GM10248 (cell line): ENCODE measurements at regions of chr15 and their contacts with region 1.

Region 1: GRCh38 chr15:52078876-52079700 is 33.5 kb downstream of the BCL2L10 start:
- DNase-seq: peak; percentile 80
- CTCF ChIP-seq: peak; percentile 75

Region 2: DNA sequence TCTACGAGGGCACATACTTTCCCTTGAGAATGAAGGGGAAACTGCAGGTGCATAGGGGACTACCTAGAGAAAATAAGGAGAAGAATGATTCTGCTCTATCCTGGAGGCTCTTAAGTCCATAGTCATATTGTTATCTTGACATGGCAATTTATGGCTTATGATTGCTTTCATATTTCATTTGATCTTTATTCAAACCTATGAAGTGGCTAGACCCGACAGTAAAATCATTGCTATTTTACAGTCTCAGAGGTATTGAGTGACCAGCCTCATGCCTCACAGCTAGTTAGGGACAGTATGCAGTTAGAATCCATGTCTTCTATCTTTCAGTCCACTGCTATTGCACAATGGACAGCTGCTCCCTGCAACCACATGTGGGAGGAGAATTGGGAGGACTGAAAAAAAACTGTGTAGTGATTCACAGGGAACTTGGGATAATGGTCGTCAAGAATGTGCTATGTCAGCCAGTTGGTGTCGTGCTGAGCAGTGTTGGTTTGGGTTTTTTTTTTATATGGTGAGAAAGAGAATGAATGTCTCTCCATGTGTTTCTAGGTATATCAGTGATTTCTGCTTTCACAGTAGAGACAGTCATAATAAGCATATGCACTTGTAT is 1250.4 kb before region 1 on chr15:
- CTCF ChIA-PET with region 1: no interaction called
- POLR2A ChIA-PET with region 1: no interaction called
- DNase-seq: no peak
- CTCF ChIP-seq: no peak

Region 3: GRCh38 chr15:51658670-51659069 is 420.4 kb before region 1 on chr15:
- CTCF ChIA-PET with region 1: no interaction called
- POLR2A ChIA-PET with region 1: no interaction called
- DNase-seq: no peak
- CTCF ChIP-seq: no peak

Region 4: DNA sequence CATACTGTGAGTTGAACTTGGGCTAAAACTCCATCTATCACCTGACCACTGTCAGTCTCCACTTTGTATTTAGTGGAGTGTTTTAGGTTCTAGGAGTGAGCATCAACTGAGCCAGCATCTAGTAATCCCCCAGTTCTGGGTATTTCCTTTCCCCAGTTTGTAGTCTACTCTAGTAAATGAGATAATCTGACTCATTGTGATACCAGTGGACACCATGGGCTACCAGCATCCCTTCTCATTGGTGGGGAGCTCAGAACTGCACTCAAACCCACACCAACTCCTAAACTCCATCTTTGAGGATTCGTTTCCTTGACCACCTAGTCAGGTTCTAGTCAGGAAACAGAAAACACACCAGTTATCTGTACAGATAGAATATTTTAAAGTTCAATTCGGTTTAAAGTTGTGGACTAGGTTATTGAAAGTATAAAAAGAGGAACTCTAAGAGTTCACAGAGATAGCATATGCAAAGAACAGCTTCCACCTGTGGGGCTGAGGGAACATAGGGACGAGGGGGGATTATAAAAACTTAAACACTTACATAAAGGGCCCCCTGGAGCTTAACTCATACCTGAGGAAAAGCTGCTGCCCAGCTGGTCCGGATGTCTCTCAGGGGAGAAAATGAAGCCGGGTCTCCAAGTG is 143.5 kb before region 1 on chr15:
- CTCF ChIA-PET with region 1: no interaction called
- POLR2A ChIA-PET with region 1: no interaction called
- DNase-seq: peak; percentile 75
- CTCF ChIP-seq: no peak

Region 5: DNA sequence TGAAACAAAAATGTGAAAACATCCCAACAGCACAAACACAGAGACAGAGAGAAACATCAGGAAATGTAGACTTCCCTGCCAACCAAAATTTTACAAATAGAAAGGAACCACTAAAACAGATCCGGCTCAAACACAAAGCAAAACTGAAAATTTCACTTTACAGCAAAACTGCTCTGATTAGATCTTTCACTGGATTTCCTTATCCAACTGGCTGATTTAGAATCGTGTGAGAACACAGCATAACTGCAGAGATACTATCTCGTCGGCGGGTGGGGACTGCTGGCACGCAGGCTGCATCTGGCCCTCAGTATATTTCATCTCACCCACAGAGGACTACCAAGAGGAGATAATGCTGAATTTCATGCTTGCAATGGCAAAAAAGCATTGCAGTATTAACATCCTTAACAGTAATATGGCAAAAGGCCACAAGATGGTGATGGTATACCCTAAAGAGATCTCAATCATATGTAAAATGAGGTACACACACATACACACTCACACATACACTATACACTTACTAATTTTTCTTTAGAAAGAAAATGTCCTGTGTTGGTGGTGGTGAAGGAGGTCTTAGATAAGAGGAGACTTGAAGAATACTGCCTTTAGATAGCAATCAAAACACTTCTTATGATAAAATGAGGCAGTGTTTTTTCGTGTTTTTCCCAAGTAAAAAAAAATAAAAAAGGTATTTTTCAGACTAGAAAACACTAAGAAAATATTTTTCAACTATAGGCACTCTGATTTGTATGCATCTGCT is 96.9 kb before region 1 on chr15:
- CTCF ChIA-PET with region 1: interaction called, 38 read pairs
- POLR2A ChIA-PET with region 1: no interaction called
- DNase-seq: peak; percentile 78
- CTCF ChIP-seq: peak; percentile 56

Region 6: DNA sequence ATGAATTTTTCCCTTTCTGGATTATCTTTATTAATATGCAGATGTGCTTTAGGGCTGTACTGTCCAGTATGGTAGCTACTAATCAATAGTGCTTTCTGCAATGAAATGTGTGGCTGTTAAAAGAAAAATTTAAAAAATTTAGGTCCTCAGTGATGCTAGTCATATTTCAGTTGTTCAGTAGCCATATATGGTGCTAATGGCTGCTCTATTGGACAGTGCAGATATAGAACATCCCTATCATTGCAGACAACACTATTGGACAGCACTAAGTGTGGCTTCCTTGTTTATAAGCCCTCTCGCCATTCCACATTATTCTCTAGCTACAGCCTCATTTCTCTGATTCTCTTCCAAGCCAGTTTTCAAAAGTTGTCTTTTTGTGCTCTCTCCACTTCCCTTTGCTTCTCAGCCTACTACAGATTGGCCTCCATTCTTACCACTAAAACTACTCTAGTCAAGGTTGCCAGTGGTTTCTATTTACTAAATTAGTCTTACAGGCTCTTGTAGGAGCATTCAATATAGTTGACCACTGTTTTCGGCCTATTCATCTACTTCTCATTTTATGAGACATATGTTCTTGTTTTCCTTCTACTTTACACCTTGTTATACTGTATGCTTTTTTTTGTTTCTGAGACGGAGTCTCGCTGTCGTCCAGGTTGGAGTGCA is 50.5 kb before region 1 on chr15:
- CTCF ChIA-PET with region 1: interaction called, 11 read pairs
- POLR2A ChIA-PET with region 1: no interaction called
- DNase-seq: no peak
- CTCF ChIP-seq: no peak

Region 7: DNA sequence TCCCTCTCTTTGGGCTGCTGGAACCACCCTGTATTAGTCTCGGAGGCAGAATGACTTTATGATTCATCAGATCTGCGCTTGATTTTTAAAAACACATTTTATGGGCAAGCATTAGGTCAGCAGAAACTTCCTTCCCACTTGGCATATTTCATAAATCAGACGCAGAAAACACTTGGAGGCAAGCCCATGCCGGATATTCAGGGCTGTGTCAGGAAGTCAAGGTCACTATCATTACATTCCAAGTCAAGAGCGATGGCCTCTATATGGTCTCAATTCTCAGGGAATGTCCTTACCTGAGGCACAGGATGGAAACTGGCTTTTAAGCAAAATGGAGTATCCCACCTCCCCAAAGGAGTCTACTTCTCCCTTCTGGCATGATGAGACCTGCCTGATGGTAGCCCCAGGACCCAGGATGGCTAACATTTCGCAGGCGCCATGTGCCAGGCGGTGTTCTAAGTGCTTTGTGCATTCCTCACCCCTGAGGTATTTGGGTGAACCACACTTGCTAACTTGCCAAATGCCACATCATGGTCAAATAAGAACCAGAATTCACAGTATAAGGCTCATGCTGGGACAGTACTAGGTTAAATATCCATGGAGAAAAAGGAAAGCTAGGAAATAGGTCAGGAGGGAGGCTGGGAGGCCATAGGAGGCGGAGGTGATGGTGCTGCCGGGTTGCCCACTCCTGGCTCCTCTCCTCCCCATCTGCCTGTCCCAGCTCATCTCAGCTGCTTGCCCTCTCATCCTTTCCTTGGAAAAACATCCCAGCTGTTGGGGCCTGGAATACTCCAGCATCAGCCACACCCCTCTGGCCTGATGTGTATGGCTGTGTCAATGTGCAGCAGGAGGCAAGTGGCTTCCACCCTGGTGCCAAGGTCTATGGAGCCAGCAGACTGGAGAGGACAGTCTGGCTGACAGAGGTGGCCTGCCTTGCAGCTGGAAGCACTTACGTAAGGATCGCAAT is 14.7 kb after region 1 on chr15:
- CTCF ChIA-PET with region 1: interaction called, 46 read pairs
- POLR2A ChIA-PET with region 1: no interaction called
- DNase-seq: no peak
- CTCF ChIP-seq: no peak

Region 8: DNA sequence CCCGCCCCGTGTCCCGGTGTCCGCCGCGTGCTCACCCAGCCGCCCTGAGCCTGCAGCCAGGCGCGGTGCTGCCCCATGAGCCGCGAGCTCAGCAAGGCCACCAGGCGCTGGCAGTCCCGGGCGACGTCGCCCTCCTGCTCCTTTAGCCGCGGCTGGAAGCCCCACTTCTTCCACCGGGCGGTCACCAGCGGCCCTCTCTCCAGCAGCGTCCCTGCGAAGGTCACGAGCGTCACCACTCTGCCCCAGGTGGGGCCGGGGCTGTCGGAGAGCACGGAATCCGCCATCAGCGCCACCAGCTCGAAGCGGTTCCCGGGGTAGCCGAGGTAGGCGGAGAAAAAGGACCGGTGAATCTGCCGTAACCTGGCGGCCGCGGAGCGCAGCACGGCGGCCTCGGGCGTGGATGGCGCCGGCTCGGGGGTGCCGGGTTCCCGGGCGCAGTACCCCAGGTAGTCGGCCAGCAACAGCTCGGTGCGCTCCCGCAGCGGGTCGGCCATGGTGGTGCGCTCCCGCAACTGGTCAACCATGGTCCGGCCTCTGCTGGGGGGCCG is 33.2 kb after region 1 on chr15:
- CTCF ChIA-PET with region 1: interaction called, 27 read pairs
- POLR2A ChIA-PET with region 1: no interaction called
- DNase-seq: peak; percentile 65
- CTCF ChIP-seq: no peak

Region 9: DNA sequence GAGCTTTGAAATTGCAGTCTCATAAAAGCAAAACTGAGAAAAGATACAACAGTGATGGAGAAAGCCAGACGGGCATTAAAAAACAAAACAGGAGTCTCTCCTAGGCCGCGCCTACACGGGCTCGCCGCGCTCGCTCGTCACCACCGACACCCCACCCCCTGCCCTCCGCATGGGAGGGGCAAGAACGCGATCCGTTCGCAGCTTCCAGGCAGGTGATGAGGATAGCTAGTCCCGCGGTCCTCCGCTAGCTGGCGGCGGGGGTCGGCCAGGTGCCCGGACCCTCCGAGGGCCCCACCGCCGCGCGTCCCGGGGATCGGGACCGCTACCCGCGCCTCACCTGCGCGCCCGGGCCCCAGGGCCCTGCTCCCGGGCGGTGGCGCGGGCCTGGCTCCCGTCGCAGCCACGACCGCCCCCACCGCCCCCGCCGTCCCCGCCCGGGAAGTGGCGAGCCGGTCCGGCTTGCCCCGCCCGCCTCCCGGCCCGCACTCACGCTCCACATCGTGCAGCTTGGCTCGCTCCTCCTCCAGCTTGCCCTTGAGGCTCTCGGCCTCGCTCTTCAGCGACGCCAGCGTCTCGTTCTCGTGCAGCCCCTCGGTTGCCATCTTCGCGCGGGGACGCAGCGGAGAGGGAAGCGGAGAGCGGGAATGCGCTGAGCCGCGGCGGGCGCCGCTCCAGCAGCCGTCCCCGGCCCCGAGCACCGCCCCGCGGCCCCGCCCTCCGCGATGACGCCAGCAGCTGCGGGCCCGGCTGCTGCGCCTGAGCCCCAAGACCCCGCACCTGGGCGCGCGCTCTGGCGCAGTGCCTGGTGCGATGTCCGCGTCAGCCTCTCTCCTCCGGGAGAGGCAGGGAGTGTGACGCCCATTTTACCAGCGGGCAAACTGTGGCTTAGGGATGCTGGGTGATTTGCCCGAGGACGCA is 100.4 kb after region 1 on chr15:
- CTCF ChIA-PET with region 1: no interaction called
- POLR2A ChIA-PET with region 1: no interaction called
- DNase-seq: peak; percentile 91
- CTCF ChIP-seq: no peak